ENCODE measurements at regions of chr1 and their contacts with region 1.

Region 1: GRCh38 chr1:169711469-169712281 is at the start of gene SELL:
- DNase-seq: peak; percentile 48 to 89 (median 78)
- ATAC-seq: peak; percentile 76
- H3K4me3 ChIP-seq: peak within 1 kb of the TSS; percentile 57 to 79
- H3K4me3 Mint-ChIP-seq: peak within 1 kb of the TSS; percentile 89
- H3K27ac ChIP-seq: peak within 1 kb of the TSS; percentile 50 to 53
- H3K27ac Mint-ChIP-seq: peak within 1 kb of the TSS; percentile 91
- H3K4me1 ChIP-seq: peaks cover 9% of the 10 kb centered on the region
- H3K4me1 Mint-ChIP-seq: peaks cover 21% of the 10 kb centered on the region
- H3K27me3 ChIP-seq: no peaks in the 10 kb centered on the region
- H3K27me3 Mint-ChIP-seq: no peaks in the 10 kb centered on the region
- CTCF ChIP-seq: peak; percentile 95
- total RNA-seq, gene SELL: 79.5 to 80.7 TPM

Region 2: GRCh38 chr1:169106095-169106920 is 605.4 kb before region 1 on chr1 and contains the start of gene ATP1B1:
- CTCF ChIA-PET with region 1: no interaction called
- POLR2A ChIA-PET with region 1: no interaction called
- intact Hi-C with region 1: loop called in 1 of 2 experiments (anchors 10 kb)
- DNase-seq: peak; percentile 59 to 88 (median 78)
- ATAC-seq: peak; percentile 89
- H3K4me3 ChIP-seq: peak within 1 kb of the TSS; percentile 65 to 74
- H3K4me3 Mint-ChIP-seq: peak within 1 kb of the TSS; percentile 91
- H3K27ac ChIP-seq: no peak within 1 kb of the TSS
- H3K27ac Mint-ChIP-seq: peak within 1 kb of the TSS; percentile 23
- H3K4me1 ChIP-seq: peaks cover 24% of the 10 kb centered on the region
- H3K4me1 Mint-ChIP-seq: peaks cover 33% of the 10 kb centered on the region
- H3K27me3 ChIP-seq: peaks cover 0 to 2% of the 10 kb centered on the region in 2 experiments
- H3K27me3 Mint-ChIP-seq: peaks cover 4% of the 10 kb centered on the region
- CTCF ChIP-seq: peak; percentile 29
- total RNA-seq, gene ATP1B1: 2.6 to 3.0 TPM

Region 3: GRCh38 chr1:169485544-169486278 is 226.0 kb before region 1 on chr1 and contains the start of gene SLC19A2:
- CTCF ChIA-PET with region 1: interaction called, 3 read pairs
- POLR2A ChIA-PET with region 1: no interaction called
- intact Hi-C with region 1: loop called (anchors 5 kb)
- DNase-seq: peak; percentile 84 to 97 (median 93)
- ATAC-seq: peak; percentile 98
- H3K4me3 ChIP-seq: peak within 1 kb of the TSS; percentile 69 to 79
- H3K4me3 Mint-ChIP-seq: peak within 1 kb of the TSS; percentile 97
- H3K27ac ChIP-seq: peak within 1 kb of the TSS; percentile 73 to 79
- H3K27ac Mint-ChIP-seq: peak within 1 kb of the TSS; percentile 95
- H3K4me1 ChIP-seq: peaks cover 20% of the 10 kb centered on the region
- H3K4me1 Mint-ChIP-seq: peaks cover 43% of the 10 kb centered on the region
- H3K27me3 ChIP-seq: no peaks in the 10 kb centered on the region
- H3K27me3 Mint-ChIP-seq: no peaks in the 10 kb centered on the region
- CTCF ChIP-seq: no peak
- total RNA-seq, gene SLC19A2: 4.7 to 6.1 TPM

Region 4: DNA sequence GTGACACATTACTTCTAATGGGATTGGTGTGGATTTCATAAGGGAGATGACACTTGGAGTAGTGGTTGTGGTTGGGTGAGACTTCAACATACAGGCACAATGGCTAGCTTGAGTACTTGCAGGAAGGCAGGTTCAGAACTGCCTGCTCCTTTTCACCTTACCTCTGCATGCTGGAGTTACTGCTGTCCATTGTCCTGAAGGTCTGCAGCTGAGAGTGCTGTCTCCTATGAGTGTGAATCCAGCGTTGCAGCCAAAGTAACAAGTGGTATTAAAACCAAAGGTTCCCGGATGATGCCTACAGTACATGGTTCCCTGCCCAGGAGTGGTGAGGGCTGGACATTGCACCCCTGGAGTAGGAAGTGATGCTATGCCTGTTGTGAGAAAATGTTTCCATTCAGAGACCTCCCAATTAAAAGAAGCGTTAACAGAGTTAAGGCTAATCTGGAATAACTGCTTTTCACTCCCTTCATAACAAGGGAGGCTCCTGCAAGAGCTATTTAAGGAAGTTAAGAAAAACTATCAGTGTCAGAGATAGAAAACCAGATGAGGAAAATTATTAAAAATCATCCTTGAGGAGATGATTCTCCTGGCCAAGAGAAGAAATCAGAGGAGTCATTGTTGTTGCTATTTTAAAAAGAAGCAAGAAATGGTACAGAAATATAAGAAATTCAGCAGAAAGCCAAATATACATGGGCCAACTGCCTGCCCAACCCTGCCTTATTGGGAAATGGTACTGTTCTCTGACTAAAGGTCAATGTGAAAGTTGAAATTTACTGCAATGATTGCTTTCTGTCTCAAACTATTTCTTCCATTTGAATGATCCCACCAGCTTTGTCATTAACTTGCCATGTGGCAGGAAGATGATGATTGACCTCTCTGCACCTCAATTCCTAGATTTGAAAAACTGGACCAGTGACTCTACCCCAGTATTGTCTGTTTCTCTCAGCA is 115.6 kb before region 1 on chr1:
- CTCF ChIA-PET with region 1: interaction called, 149 read pairs
- POLR2A ChIA-PET with region 1: interaction called, 17 read pairs
- intact Hi-C with region 1: loop called (anchors 1 kb)
- DNase-seq: peak in 1 of 9 experiments; percentile 15
- ATAC-seq: peak; percentile 40
- H3K4me3 ChIP-seq: no peak overlapping the region
- H3K4me3 Mint-ChIP-seq: no peak overlapping the region
- H3K27ac ChIP-seq: no peak overlapping the region
- H3K27ac Mint-ChIP-seq: no peak overlapping the region
- H3K4me1 ChIP-seq: peaks cover 5% of the 10 kb centered on the region
- H3K4me1 Mint-ChIP-seq: peaks cover 5% of the 10 kb centered on the region
- H3K27me3 ChIP-seq: no peaks in the 10 kb centered on the region
- H3K27me3 Mint-ChIP-seq: no peaks in the 10 kb centered on the region
- CTCF ChIP-seq: no peak

Region 5: DNA sequence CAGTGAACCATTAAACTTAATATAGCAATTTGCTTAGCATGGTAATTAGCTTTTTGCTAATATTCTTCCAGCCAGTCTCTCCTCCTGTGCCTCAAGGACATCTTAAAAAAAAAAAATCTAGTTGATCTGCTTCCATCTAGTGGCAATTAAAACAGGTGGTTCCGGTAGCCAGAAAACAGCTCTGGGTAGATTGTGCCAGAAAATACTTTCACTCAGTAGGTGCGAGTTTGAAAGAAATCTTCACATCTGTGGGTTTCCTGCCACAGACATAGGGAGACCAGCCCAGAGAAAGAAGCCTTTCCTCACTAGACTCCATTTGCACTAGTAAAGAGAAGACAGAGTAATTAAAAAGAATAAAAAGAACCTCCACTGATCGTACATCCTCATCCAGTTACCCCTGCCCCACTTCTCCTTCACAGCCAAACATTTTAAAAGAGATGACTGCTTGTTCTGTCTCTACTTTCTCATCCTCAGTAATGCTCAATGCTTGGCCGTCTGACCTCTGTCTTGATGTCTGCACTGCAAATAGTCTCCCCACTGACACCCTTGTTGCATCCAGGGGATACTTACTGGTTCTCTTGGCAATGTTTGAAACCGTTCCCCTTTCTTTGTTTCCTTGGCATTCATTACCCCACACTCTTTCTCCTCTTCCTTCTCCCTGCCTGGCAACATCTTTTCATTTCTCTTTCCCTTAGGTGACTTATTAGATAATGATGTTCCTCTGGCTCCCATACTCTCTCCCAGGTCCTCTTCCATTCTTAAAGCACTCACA is 17.2 kb before region 1 on chr1:
- CTCF ChIA-PET with region 1: interaction called, 43 read pairs
- POLR2A ChIA-PET with region 1: interaction called, 82 read pairs
- intact Hi-C with region 1: loop called (anchors 1 to 2 kb)
- DNase-seq: peak in 7 of 9 experiments; percentile 19 to 88 (median 58)
- ATAC-seq: peak; percentile 59
- H3K4me3 ChIP-seq: no peak overlapping the region
- H3K4me3 Mint-ChIP-seq: peak overlapping the region; percentile 60
- H3K27ac ChIP-seq: peak overlapping the region; percentile 50 to 74
- H3K27ac Mint-ChIP-seq: no peak overlapping the region
- H3K4me1 ChIP-seq: peaks cover 96% of the 10 kb centered on the region
- H3K4me1 Mint-ChIP-seq: peaks cover 71% of the 10 kb centered on the region
- H3K27me3 ChIP-seq: no peaks in the 10 kb centered on the region
- H3K27me3 Mint-ChIP-seq: no peaks in the 10 kb centered on the region
- CTCF ChIP-seq: peak; percentile 50

Region 6: GRCh38 chr1:169809370-169810095 is 97.9 kb after region 1 on chr1:
- CTCF ChIA-PET with region 1: interaction called, 11 read pairs
- POLR2A ChIA-PET with region 1: no interaction called
- intact Hi-C with region 1: loop called in 1 of 2 experiments (anchors 1 kb)
- DNase-seq: peak in 3 of 9 experiments; percentile 34 to 59 (median 52)
- ATAC-seq: no peak
- H3K4me3 ChIP-seq: no peak overlapping the region
- H3K4me3 Mint-ChIP-seq: no peak overlapping the region
- H3K27ac ChIP-seq: no peak overlapping the region
- H3K27ac Mint-ChIP-seq: no peak overlapping the region
- H3K4me1 ChIP-seq: no peaks in the 10 kb centered on the region
- H3K4me1 Mint-ChIP-seq: peaks cover 2% of the 10 kb centered on the region
- H3K27me3 ChIP-seq: no peaks in the 10 kb centered on the region
- H3K27me3 Mint-ChIP-seq: no peaks in the 10 kb centered on the region
- CTCF ChIP-seq: peak; percentile 71

Measured in CD8-positive, alpha-beta T cell (primary cell).